ENCODE measurements at regions of chr22 and their contacts with region 1.

Region 1: DNA sequence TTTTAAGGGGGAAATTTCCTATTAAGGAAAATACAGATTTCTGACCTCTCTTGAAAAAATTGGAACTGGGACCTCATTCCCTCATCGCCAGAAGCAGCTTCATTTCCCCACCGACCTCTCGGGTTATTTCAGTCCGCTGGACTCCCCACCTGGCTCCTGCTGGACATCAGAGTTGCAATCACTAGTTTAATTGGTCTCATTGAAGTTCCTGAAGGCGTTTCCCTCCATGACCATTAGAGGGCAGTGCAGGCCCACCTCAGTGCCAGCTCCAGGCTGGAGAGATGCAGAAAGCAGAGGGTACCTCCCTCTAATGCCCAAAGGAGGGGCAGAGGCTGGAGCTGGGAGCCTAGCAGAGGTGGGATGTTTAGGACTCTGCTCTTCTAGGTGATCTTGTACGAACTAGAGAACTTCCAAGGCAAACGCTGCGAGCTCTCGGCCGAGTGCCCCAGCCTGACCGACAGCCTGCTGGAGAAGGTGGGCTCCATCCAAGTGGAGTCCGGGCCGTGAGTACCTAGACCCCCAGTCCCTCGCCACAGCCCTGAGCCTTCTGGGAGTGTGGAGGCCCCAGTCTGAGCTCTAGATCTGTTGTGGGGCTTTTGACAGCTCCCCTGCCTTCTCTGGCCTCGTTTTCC is 2.7 kb downstream of the CRYBB3 start:
- DNase-seq: peak in 8 of 10 donors; percentile 43 to 93 (median 70)

Region 2: DNA sequence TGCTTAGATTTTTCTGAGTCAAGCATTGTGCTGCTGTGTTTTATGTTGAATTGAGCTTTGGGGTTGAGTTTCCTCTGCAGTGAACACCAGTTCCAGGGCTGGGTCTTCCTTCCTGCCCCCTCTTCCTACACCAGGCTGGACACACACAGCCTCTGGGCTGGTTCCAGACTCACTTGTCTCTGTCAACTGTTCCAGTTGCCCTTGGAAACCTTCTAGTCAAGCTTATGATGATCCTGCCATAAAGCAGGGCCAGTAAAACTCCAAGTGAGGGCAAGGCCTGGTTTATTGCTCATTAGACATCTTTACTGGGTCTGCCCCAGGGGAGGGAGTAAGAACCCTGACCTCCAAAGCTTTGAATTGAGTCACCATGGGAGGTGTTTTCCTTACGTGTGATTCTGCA is 188.8 kb before region 1 on chr22:
- intact Hi-C with region 1: no loop called
- DNase-seq: no peak

Region 3: GRCh38 chr22:25334162-25334490 is 131.7 kb after region 1 on chr22:
- intact Hi-C with region 1: loop called (anchors 2 kb)
- DNase-seq: peak in 8 of 10 donors; percentile 26 to 93 (median 57)

Region 4: DNA sequence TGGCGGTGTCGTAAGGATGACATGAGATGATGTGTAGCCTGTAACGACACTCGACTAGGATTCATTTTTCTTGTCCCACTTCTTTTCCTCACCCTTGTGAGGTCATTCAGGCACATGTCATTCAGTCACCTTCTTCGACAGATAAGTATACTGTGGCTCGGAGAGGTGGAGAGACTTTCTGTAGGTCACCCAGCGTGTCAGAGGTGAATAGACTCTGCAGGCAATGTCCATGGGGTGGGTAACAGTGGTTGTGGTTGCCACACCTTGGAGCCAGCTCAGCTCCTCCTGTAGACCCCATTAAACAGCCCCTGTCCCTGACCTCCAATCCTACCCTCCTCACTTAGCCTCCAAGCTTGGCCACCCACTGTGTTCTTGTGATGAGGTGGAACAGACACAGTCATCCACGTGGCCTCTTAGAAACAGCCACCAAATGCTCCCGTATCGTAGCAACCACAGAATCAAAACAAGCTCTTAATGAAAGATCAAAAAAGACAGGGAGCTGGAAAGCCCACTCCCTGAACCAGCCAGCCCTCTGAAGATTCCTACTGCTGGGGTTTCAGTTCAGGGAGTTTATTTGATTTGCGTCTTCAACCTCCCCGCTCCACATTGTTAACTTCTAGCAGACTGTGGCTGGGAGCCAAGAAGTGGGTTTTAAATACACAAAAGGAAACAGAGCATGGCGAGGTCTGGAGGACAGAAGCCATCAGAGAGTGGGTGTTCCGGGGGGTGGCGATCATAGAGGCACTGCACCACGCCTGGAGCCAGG is 273.0 kb after region 1 on chr22:
- intact Hi-C with region 1: no loop called
- DNase-seq: no peak

Measured in posterior cingulate gyrus (tissue), 11 donors.